Right ventricle myocardium inferior (tissue), 1 donor: ENCODE measurements at regions of chr22 and their contacts with region 1.

Region 1: GRCh38 chr22:24005201-24005600 is at the start of gene GSTT4:
- DNase-seq: peak; percentile 90
- ATAC-seq: peak; percentile 92
- total RNA-seq, gene GSTT4: not detected

Region 2: GRCh38 chr22:24106385-24107381 is 101.5 kb after region 1 on chr22:
- intact Hi-C with region 1: loop called (anchors 10 kb)
- DNase-seq: no peak
- ATAC-seq: peak; percentile 4